ENCODE measurements at regions of chr10 and their contacts with region 1.

Region 1: DNA sequence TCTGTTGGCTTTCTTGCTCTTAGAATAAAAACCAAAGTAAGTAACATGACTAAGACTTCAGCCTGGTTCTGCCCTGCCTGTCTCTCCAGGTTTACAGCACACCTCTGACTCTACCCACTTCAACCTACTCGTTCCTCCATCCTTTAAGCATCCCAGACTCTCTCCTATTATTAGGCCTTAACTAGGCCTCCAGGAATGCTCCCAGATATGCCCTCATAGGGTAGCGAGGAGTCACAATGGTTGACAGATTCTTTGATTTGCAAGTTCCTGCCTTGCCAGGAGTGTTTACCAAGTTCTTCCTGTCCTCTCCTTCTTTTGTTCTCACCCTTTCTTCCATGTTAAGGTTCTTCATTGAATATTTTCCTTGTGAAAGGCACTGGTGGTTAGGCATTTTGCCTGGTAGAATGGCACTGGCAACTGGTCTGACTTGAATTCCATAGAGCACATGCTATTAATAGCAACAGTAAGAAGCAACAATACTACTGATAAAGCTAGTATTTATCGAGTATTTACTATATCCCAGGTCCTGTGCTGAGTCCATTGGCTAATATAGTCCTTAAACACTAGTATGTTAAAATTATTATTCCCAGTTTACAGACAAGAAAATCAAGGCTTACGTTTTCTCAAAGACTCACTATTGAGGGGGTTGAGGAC is 327.9 kb upstream of the PRKCQ start:
- DNase-seq: no peak
- ATAC-seq: no peak
- H3K4me3 ChIP-seq: no peak overlapping the region
- H3K27ac ChIP-seq: no peak overlapping the region
- H3K4me1 ChIP-seq: no peaks in the 10 kb centered on the region
- H3K27me3 ChIP-seq: no peaks in the 10 kb centered on the region
- CTCF ChIP-seq: no peak
- POLR2A ChIP-seq: no peak

Region 2: DNA sequence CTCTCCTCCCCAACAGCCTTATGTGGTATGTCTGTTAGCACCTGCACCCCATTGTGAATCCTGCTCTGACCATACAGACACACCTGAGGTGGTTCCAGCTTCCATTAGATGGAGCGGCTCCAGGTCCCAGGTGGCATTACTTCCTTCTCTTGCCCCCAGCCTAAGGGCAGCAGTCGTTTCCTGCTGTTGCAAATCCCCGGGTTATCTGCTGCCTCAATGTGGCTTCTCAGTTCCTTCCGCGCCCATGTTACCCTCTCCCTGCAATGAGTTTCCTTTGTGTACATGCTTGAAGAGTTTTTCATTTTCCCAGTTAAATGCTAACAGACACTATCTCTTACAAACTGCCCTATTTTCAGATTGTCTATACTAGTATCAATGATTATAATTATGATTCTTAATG is 265.1 kb before region 1 on chr10:
- in situ Hi-C with region 1: no loop called
- intact Hi-C with region 1: no loop called
- DNase-seq: no peak
- ATAC-seq: no peak
- H3K4me3 ChIP-seq: no peak overlapping the region
- H3K27ac ChIP-seq: no peak overlapping the region
- H3K4me1 ChIP-seq: no peaks in the 10 kb centered on the region
- H3K27me3 ChIP-seq: no peaks in the 10 kb centered on the region
- CTCF ChIP-seq: no peak
- POLR2A ChIP-seq: no peak

Region 3: GRCh38 chr10:6819301-6819700 is 88.7 kb before region 1 on chr10:
- in situ Hi-C with region 1: loop called in 1 of 4 experiments (anchors 5 kb)
- intact Hi-C with region 1: no loop called
- DNase-seq: no peak
- ATAC-seq: no peak
- H3K4me3 ChIP-seq: no peak overlapping the region
- H3K27ac ChIP-seq: no peak overlapping the region
- H3K4me1 ChIP-seq: no peaks in the 10 kb centered on the region
- H3K27me3 ChIP-seq: no peaks in the 10 kb centered on the region
- CTCF ChIP-seq: no peak
- POLR2A ChIP-seq: no peak

Measured in gastrocnemius medialis (tissue), 4 donors.